Keratinocyte (primary cell): ENCODE measurements at regions of chr3 and their contacts with region 1.

Region 1: DNA sequence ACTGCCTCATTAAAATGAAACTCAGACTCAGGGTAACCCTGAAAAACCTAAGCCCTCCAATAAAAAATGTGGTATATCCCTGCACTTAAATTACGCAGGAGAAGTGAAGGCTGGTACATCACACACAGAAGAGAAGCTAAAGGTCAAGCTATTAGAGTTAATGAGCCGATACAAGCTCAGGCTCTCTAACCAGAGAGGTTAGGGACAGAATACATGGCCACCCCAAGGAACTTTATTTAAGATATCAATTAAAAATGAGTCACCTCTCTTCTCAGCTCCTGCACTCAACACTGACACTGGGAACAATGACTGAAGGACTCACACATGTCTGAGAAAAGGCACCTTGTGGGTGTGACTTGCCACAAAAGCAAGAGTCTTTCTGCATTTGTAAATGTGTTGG is 800.6 kb upstream of the CFAP20DC start:
- DNase-seq: no peak
- H3K4me3 ChIP-seq: no peak overlapping the region
- H3K27ac ChIP-seq: no peak overlapping the region
- H3K4me1 ChIP-seq: no peaks in the 10 kb centered on the region
- H3K27me3 ChIP-seq: no peaks in the 10 kb centered on the region
- CTCF ChIP-seq: no peak

Region 2: GRCh38 chr3:59809710-59810444 is 40.5 kb before region 1 on chr3:
- dilution Hi-C with region 1: loop called (anchors 5 kb)
- DNase-seq: no peak
- H3K4me3 ChIP-seq: no peak overlapping the region
- H3K27ac ChIP-seq: no peak overlapping the region
- H3K4me1 ChIP-seq: no peaks in the 10 kb centered on the region
- H3K27me3 ChIP-seq: no peaks in the 10 kb centered on the region
- CTCF ChIP-seq: peak; percentile 32 to 55 (median 35)